Vagina (tissue), 2 donors: ENCODE measurements at regions of chr3 and their contacts with region 1.

Region 1: GRCh38 chr3:99833617-99834205 is 16.0 kb downstream of the CMSS1 start:
- DNase-seq: no peak
- H3K4me3 ChIP-seq: no peak overlapping the region
- H3K27ac ChIP-seq: no peak overlapping the region
- H3K4me1 ChIP-seq: no peaks in the 10 kb centered on the region
- H3K27me3 ChIP-seq: no peaks in the 10 kb centered on the region
- CTCF ChIP-seq: no peak
- POLR2A ChIP-seq: no peak

Region 2: DNA sequence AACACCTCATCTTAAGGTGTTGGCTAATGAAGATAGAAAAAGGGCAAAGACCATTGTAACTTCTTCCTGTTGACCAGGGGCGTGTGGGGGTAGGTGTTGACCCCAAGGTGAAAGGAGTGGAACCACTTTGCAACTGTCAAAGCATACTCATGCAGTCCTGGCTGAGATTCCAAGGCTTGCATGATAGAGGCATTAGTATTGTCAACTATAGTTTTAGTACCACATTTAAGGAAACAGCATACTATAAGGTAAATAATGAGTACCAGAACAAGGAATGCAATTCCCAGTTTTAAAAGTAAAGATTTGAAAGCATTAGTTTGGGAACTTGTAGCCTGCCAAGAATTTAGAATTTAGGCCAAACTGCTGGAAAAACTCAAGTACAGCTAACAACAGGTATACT is 747.9 kb after region 1 on chr3:
- intact Hi-C with region 1: loop called (anchors 10 kb)
- DNase-seq: no peak
- H3K4me3 ChIP-seq: no peak overlapping the region
- H3K27ac ChIP-seq: no peak overlapping the region
- H3K4me1 ChIP-seq: no peaks in the 10 kb centered on the region
- H3K27me3 ChIP-seq: no peaks in the 10 kb centered on the region
- CTCF ChIP-seq: no peak
- POLR2A ChIP-seq: no peak